SK-N-SH (cell line): ENCODE measurements at regions of chr20 and their contacts with region 1.

Region 1: GRCh38 chr20:48904365-48905296 is 16.9 kb upstream of the ARFGEF2 start:
- DNase-seq: peak; percentile 68
- H3K4me3 ChIP-seq: no peak overlapping the region
- H3K27ac ChIP-seq: no peak overlapping the region
- H3K4me1 ChIP-seq: peaks cover 0 to 4% of the 10 kb centered on the region in 2 experiments; a peak in 2 of 4 replicates
- H3K27me3 ChIP-seq: no peaks in the 10 kb centered on the region
- CTCF ChIP-seq: peak; percentile 92
- EP300 ChIP-seq: no peak
- RAD21 ChIP-seq: peak; percentile 95

Region 2: GRCh38 chr20:48635433-48636310 is 269.0 kb before region 1 on chr20:
- CTCF ChIA-PET with region 1: interaction called, 23 read pairs
- POLR2A ChIA-PET with region 1: no interaction called
- DNase-seq: peak; percentile 90
- H3K4me3 ChIP-seq: no peak overlapping the region
- H3K27ac ChIP-seq: no peak overlapping the region
- H3K4me1 ChIP-seq: peaks cover 0 to 20% of the 10 kb centered on the region in 2 experiments; a peak in 1 of 4 replicates
- H3K27me3 ChIP-seq: no peaks in the 10 kb centered on the region
- CTCF ChIP-seq: peak; percentile 90
- EP300 ChIP-seq: no peak
- RAD21 ChIP-seq: peak; percentile 90

Region 3: GRCh38 chr20:48648550-48648951 is 256.1 kb before region 1 on chr20:
- CTCF ChIA-PET with region 1: interaction called, 245 read pairs
- POLR2A ChIA-PET with region 1: no interaction called
- DNase-seq: no peak
- H3K4me3 ChIP-seq: no peak overlapping the region
- H3K27ac ChIP-seq: no peak overlapping the region
- H3K4me1 ChIP-seq: no peaks in the 10 kb centered on the region
- H3K27me3 ChIP-seq: no peaks in the 10 kb centered on the region
- CTCF ChIP-seq: no peak
- EP300 ChIP-seq: no peak
- RAD21 ChIP-seq: no peak

Region 4: DNA sequence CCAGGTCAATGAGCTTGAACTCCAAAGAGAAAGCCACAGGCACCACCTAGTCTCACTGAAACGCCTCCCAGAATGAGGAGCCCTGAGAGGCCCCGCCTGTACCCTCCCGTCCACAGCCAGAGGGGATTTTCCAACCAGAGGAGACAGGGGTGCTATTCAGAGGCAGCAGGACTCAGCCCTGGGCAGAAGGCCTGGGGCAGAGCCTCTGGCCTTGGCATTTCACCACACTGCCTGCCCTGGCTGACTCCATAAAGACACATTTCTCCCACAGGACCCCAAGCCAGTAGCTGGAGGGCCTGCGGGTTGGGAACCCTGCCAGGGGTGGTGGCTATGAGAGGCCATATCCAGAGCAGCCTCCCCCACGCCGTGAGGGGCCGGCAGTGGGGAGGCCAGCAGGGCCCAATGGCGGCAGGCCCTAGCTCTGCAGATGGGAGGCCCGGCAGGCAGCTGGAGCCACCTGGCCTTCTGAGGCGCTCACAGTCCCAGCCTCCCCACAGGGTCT is 236.1 kb before region 1 on chr20:
- CTCF ChIA-PET with region 1: interaction called, 10 read pairs
- POLR2A ChIA-PET with region 1: no interaction called
- DNase-seq: peak; percentile 43
- H3K4me3 ChIP-seq: no peak overlapping the region
- H3K27ac ChIP-seq: no peak overlapping the region; a peak in 1 of 4 replicates
- H3K4me1 ChIP-seq: peaks cover 0 to 19% of the 10 kb centered on the region in 2 experiments; a peak in 1 of 4 replicates
- H3K27me3 ChIP-seq: no peaks in the 10 kb centered on the region
- CTCF ChIP-seq: no peak
- EP300 ChIP-seq: no peak
- RAD21 ChIP-seq: no peak

Region 5: DNA sequence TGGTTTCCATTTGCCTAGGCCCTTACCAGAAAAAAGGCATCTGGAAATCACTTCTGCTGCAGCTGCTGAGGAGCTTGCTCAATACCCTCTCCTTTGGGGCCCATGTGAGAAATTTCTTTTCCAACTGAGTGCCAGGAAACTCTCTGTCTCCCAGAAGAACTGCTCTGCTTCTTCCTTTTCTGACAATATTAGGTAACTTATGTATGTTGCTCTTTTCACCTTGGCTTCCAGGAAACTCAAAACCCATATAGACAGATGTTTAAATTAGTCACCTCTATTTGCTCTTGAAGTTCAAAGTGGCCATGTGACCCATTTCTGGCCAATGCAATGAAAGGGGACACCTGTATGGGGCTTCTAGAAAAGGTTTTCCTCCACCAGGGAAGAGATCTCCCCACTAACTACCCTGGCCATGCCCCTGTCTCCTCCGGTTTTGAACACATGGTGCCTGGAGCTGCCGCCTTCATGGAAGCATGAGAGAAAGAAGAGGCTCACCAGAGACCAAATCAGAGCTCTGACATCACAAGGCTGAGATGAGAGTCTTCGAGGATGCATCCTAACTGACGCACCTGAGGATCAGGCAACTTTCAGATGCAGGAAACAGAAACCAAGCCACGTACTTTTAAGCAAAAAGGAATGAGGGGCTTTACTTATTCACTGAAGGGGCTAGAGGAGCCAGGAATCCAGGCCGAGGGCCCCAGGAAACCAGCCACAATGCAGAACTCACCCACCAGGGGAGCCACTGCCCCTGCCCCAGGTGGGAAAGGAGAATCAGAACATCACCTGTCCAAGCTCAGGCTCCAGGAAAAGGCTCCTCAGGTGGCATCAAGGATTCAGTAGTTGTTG is 198.2 kb before region 1 on chr20:
- CTCF ChIA-PET with region 1: interaction called, 12 read pairs
- POLR2A ChIA-PET with region 1: no interaction called
- DNase-seq: no peak
- H3K4me3 ChIP-seq: no peak overlapping the region
- H3K27ac ChIP-seq: no peak overlapping the region
- H3K4me1 ChIP-seq: peaks cover 0 to 15% of the 10 kb centered on the region in 2 experiments; a peak in 1 of 4 replicates
- H3K27me3 ChIP-seq: no peaks in the 10 kb centered on the region
- CTCF ChIP-seq: no peak; the same call in 1 of the 2 replicates
- EP300 ChIP-seq: no peak
- RAD21 ChIP-seq: no peak

Region 6: GRCh38 chr20:48889144-48890114 is 15.2 kb before region 1 on chr20:
- CTCF ChIA-PET with region 1: interaction called, 11 read pairs
- POLR2A ChIA-PET with region 1: no interaction called
- DNase-seq: peak; percentile 60
- H3K4me3 ChIP-seq: no peak overlapping the region
- H3K27ac ChIP-seq: peak overlapping the region in 1 of 2 experiments; percentile 11; a peak in 1 of 4 replicates
- H3K4me1 ChIP-seq: peaks cover 7 to 9% of the 10 kb centered on the region in 2 experiments; a peak in 2 of 4 replicates
- H3K27me3 ChIP-seq: no peaks in the 10 kb centered on the region
- CTCF ChIP-seq: no peak
- EP300 ChIP-seq: peak in 1 of 2 experiments; percentile 31; a peak in 1 of 4 replicates
- RAD21 ChIP-seq: no peak

Region 7: GRCh38 chr20:48921151-48921898 is 16.7 kb after region 1 on chr20 and contains the start of gene ARFGEF2:
- CTCF ChIA-PET with region 1: interaction called, 12 read pairs
- POLR2A ChIA-PET with region 1: interaction called, 3 read pairs
- DNase-seq: peak; percentile 99
- H3K4me3 ChIP-seq: peak within 1 kb of the TSS; percentile 80 to 92
- H3K27ac ChIP-seq: peak within 1 kb of the TSS; percentile 62 to 77
- H3K4me1 ChIP-seq: peaks cover 9 to 17% of the 10 kb centered on the region in 2 experiments; a peak in 3 of 4 replicates
- H3K27me3 ChIP-seq: no peaks in the 10 kb centered on the region
- CTCF ChIP-seq: no peak
- EP300 ChIP-seq: no peak
- RAD21 ChIP-seq: no peak
- polyA plus RNA-seq, gene ARFGEF2: 6.1 and 8.4 TPM in 2 replicates

Region 8: GRCh38 chr20:49037962-49038387 is 133.3 kb after region 1 on chr20:
- CTCF ChIA-PET with region 1: no interaction called
- POLR2A ChIA-PET with region 1: no interaction called
- DNase-seq: no peak
- H3K4me3 ChIP-seq: no peak overlapping the region
- H3K27ac ChIP-seq: no peak overlapping the region
- H3K4me1 ChIP-seq: no peaks in the 10 kb centered on the region
- H3K27me3 ChIP-seq: no peaks in the 10 kb centered on the region
- CTCF ChIP-seq: no peak
- EP300 ChIP-seq: no peak
- RAD21 ChIP-seq: no peak